Transverse colon (tissue), 4 donors: ENCODE measurements at regions of chr10 and their contacts with region 1.

Region 1: GRCh38 chr10:60964257-60965235 is 20.6 kb upstream of the RHOBTB1 start:
- DNase-seq: peak; percentile 71
- H3K4me3 ChIP-seq: no peak overlapping the region
- H3K27ac ChIP-seq: peak overlapping the region; percentile 31 to 64 (median 46)
- H3K4me1 ChIP-seq: peaks cover 0 to 14% (median 0%) of the 10 kb centered on the region in 4 donors
- H3K27me3 ChIP-seq: no peaks in the 10 kb centered on the region
- CTCF ChIP-seq: peak; percentile 78 to 86 (median 80)
- EP300 ChIP-seq: no peak
- POLR2A ChIP-seq: no peak

Region 2: GRCh38 chr10:60810809-60811182 is 153.8 kb before region 1 on chr10:
- in situ Hi-C with region 1: loop called in 3 of 4 experiments (anchors 5 to 10 kb)
- intact Hi-C with region 1: no loop called
- DNase-seq: no peak
- H3K4me3 ChIP-seq: no peak overlapping the region
- H3K27ac ChIP-seq: peak overlapping the region; percentile 23 to 59 (median 44)
- H3K4me1 ChIP-seq: peaks cover 0 to 18% (median 0%) of the 10 kb centered on the region in 4 donors
- H3K27me3 ChIP-seq: no peaks in the 10 kb centered on the region
- CTCF ChIP-seq: no peak
- EP300 ChIP-seq: no peak
- POLR2A ChIP-seq: no peak

Region 3: GRCh38 chr10:60883187-60883586 is 81.4 kb before region 1 on chr10:
- in situ Hi-C with region 1: loop called in 1 of 4 experiments (anchors 10 kb)
- intact Hi-C with region 1: no loop called
- DNase-seq: peak; percentile 19
- H3K4me3 ChIP-seq: no peak overlapping the region
- H3K27ac ChIP-seq: no peak overlapping the region
- H3K4me1 ChIP-seq: no peaks in the 10 kb centered on the region
- H3K27me3 ChIP-seq: no peaks in the 10 kb centered on the region
- CTCF ChIP-seq: peak; percentile 43 to 58 (median 54)
- EP300 ChIP-seq: no peak
- POLR2A ChIP-seq: no peak

Region 4: GRCh38 chr10:61332581-61332980 is 368.0 kb after region 1 on chr10:
- in situ Hi-C with region 1: no loop called
- intact Hi-C with region 1: no loop called
- DNase-seq: no peak
- H3K4me3 ChIP-seq: no peak overlapping the region
- H3K27ac ChIP-seq: no peak overlapping the region
- H3K4me1 ChIP-seq: no peaks in the 10 kb centered on the region
- H3K27me3 ChIP-seq: no peaks in the 10 kb centered on the region
- CTCF ChIP-seq: no peak
- EP300 ChIP-seq: no peak
- POLR2A ChIP-seq: no peak